ENCODE measurements at regions of chr4 and their contacts with region 1.

Region 1: GRCh38 chr4:169612871-169613859 is 782 bp upstream of the NEK1 start:
- DNase-seq: peak; percentile 64
- H3K4me3 Mint-ChIP-seq: peak overlapping the region; percentile 98
- H3K27ac Mint-ChIP-seq: peak overlapping the region; percentile 99
- H3K4me1 Mint-ChIP-seq: peaks cover 55% of the 10 kb centered on the region
- H3K27me3 Mint-ChIP-seq: no peaks in the 10 kb centered on the region

Region 2: GRCh38 chr4:168923526-168924194 is 689.5 kb before region 1 on chr4:
- intact Hi-C with region 1: loop called (anchors 5 kb)
- DNase-seq: peak; percentile 17
- H3K4me3 Mint-ChIP-seq: no peak overlapping the region
- H3K27ac Mint-ChIP-seq: no peak overlapping the region
- H3K4me1 Mint-ChIP-seq: peaks cover 5% of the 10 kb centered on the region
- H3K27me3 Mint-ChIP-seq: no peaks in the 10 kb centered on the region

Region 3: GRCh38 chr4:169540774-169541173 is 72.4 kb before region 1 on chr4:
- intact Hi-C with region 1: no loop called
- DNase-seq: no peak
- H3K4me3 Mint-ChIP-seq: no peak overlapping the region
- H3K27ac Mint-ChIP-seq: no peak overlapping the region
- H3K4me1 Mint-ChIP-seq: no peaks in the 10 kb centered on the region
- H3K27me3 Mint-ChIP-seq: no peaks in the 10 kb centered on the region

Region 4: GRCh38 chr4:169757575-169758184 is 144.5 kb after region 1 on chr4 and contains the start of gene HPF1:
- intact Hi-C with region 1: loop called (anchors 1 kb)
- DNase-seq: peak; percentile 92
- H3K4me3 Mint-ChIP-seq: peak within 1 kb of the TSS; percentile 93
- H3K27ac Mint-ChIP-seq: peak within 1 kb of the TSS; percentile 69
- H3K4me1 Mint-ChIP-seq: peaks cover 32% of the 10 kb centered on the region
- H3K27me3 Mint-ChIP-seq: peaks cover 2% of the 10 kb centered on the region
- total RNA-seq, gene HPF1: 21.5 and 23.4 TPM in 2 replicates

Region 5: DNA sequence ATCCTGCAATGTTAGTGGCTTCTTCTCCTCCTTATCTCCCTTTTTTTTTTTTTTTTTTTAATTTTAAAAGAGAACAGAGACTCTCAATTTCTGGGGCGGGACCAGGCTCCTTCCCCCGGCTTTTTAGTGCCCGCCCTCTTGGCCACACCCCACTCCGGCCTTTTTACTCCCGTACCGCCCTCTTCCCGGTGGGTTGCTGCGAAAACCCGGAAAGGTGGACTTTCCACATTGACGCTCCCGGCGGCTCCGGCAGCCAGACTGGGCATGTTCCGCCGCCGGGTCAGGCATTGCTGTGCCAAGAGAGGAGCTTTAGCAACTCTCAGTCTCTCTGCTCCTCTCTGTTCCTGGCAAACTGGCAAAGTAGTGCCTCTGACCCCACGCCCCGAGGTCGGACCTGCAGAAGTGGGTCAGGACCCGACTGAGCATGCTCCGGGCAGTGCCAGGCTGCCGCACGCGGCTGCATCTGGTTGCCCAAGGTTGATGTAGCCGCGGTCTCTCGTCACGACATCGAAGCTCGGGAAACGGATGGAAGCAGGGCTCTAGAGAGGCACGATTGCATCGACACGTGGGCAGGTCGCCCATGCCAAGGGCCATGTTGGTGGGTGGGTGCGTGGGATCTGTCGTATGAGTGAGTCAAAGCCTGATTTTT is 414.1 kb after region 1 on chr4:
- intact Hi-C with region 1: loop called (anchors 1 kb)
- DNase-seq: peak; percentile 82
- H3K4me3 Mint-ChIP-seq: peak overlapping the region; percentile 85
- H3K27ac Mint-ChIP-seq: peak overlapping the region; percentile 79
- H3K4me1 Mint-ChIP-seq: peaks cover 8% of the 10 kb centered on the region
- H3K27me3 Mint-ChIP-seq: peaks cover 53% of the 10 kb centered on the region

Measured in activated T-helper 1 cell treated with anti-CD3 and anti-CD28 coated beads, Interleukin-12 subunit alpha, Interleukin-12 subunit beta, Interleukin-2, Interleukin-4 antibody, amounts not matched to agents 30 ng/mL and 10 ng/mL and 1 ng/mL, durations not matched to agents 14 hours and 24 hours and 36 hours (primary cell).